Naive thymus-derived CD4-positive, alpha-beta T cell (primary cell): ENCODE measurements at regions of chr13 and their contacts with region 1.

Region 1: DNA sequence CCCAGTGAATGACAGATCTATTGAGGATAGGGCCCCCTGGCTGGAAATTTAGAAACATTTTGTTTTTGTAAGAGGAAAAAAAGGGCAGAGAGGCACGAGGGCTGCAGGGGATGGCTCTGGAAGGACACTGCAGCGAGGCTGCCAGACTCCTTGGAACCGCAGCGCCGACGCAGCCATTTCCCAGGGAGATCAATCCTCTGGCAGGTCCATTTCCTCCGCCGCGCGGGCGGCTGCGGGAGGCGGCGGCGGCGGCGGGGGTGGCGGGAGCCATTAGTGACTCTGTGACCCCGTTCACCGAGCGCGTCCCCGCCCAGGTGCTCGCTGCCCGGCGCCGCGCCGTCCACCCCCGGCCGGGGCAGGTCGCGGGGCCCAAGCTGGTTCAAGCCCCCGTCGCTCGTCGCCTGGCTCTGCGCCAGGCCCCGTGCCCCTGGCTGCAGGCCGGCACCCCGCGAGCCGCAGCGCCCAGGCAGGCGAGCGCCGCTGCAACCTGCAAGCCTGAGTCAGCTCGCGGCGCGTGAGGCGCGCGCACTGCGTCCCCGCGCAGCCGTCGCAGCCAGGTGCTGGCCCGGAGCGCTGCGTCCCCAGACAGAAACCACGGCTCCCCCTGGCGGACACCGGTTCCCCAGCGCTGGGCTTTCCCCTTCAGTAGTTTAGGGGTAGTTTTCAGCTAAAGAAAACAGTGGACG is 192.6 kb downstream of the KATNAL1 start:
- DNase-seq: peak; percentile 81 to 94 (median 91)
- ATAC-seq: peak; percentile 95
- H3K4me3 ChIP-seq: peak overlapping the region; percentile 48
- H3K4me3 Mint-ChIP-seq: peak overlapping the region; percentile 74 to 89 (median 84)
- H3K27ac ChIP-seq: peak overlapping the region; percentile 39
- H3K27ac Mint-ChIP-seq: peak overlapping the region in 8 of 9 donors; percentile 43 to 90 (median 80)
- H3K4me1 ChIP-seq: peaks cover 10 to 17% of the 10 kb centered on the region in 2 donors
- H3K4me1 Mint-ChIP-seq: peaks cover 17 to 41% (median 34%) of the 10 kb centered on the region in 7 donors
- H3K27me3 ChIP-seq: no peaks in the 10 kb centered on the region
- H3K27me3 Mint-ChIP-seq: peaks cover 0 to 11% (median 0%) of the 10 kb centered on the region in 5 donors

Region 2: GRCh38 chr13:29508130-29508875 is 606.4 kb before region 1 on chr13:
- CTCF ChIA-PET with region 1: interaction called, 41 read pairs
- POLR2A ChIA-PET with region 1: no interaction called
- intact Hi-C with region 1: loop called (anchors 1 kb)
- DNase-seq: peak; percentile 32 to 74 (median 61)
- ATAC-seq: peak; percentile 76
- H3K4me3 ChIP-seq: no peak overlapping the region
- H3K4me3 Mint-ChIP-seq: no peak overlapping the region
- H3K27ac ChIP-seq: no peak overlapping the region
- H3K27ac Mint-ChIP-seq: peak overlapping the region in 1 of 9 donors; percentile 21
- H3K4me1 ChIP-seq: no peaks in the 10 kb centered on the region
- H3K4me1 Mint-ChIP-seq: peaks cover 0 to 2% (median under 1%) of the 10 kb centered on the region in 7 donors
- H3K27me3 ChIP-seq: no peaks in the 10 kb centered on the region
- H3K27me3 Mint-ChIP-seq: peaks cover 3 to 6% (median 5%) of the 10 kb centered on the region in 5 donors

Region 3: GRCh38 chr13:29583073-29583785 is 531.5 kb before region 1 on chr13:
- CTCF ChIA-PET with region 1: no interaction called
- POLR2A ChIA-PET with region 1: no interaction called
- intact Hi-C with region 1: no loop called
- DNase-seq: no peak
- ATAC-seq: no peak
- H3K4me3 ChIP-seq: no peak overlapping the region
- H3K4me3 Mint-ChIP-seq: peak overlapping the region in 1 of 10 donors; percentile 9
- H3K27ac ChIP-seq: no peak overlapping the region
- H3K27ac Mint-ChIP-seq: peak overlapping the region in 2 of 9 donors; percentile 22 to 34
- H3K4me1 ChIP-seq: no peaks in the 10 kb centered on the region
- H3K4me1 Mint-ChIP-seq: peaks cover 16 to 77% (median 56%) of the 10 kb centered on the region in 7 donors
- H3K27me3 ChIP-seq: no peaks in the 10 kb centered on the region
- H3K27me3 Mint-ChIP-seq: no peaks in the 10 kb centered on the region

Region 4: GRCh38 chr13:29707876-29708543 is 406.7 kb before region 1 on chr13:
- CTCF ChIA-PET with region 1: no interaction called
- POLR2A ChIA-PET with region 1: no interaction called
- intact Hi-C with region 1: loop called in 1 of 2 experiments (anchors 5 kb)
- DNase-seq: peak in 7 of 9 donors; percentile 8 to 49 (median 31)
- ATAC-seq: peak; percentile 61
- H3K4me3 ChIP-seq: no peak overlapping the region
- H3K4me3 Mint-ChIP-seq: no peak overlapping the region
- H3K27ac ChIP-seq: no peak overlapping the region
- H3K27ac Mint-ChIP-seq: no peak overlapping the region
- H3K4me1 ChIP-seq: no peaks in the 10 kb centered on the region
- H3K4me1 Mint-ChIP-seq: peaks cover 0 to 3% (median 0%) of the 10 kb centered on the region in 7 donors
- H3K27me3 ChIP-seq: no peaks in the 10 kb centered on the region
- H3K27me3 Mint-ChIP-seq: peaks cover 10 to 26% (median 12%) of the 10 kb centered on the region in 5 donors

Region 5: DNA sequence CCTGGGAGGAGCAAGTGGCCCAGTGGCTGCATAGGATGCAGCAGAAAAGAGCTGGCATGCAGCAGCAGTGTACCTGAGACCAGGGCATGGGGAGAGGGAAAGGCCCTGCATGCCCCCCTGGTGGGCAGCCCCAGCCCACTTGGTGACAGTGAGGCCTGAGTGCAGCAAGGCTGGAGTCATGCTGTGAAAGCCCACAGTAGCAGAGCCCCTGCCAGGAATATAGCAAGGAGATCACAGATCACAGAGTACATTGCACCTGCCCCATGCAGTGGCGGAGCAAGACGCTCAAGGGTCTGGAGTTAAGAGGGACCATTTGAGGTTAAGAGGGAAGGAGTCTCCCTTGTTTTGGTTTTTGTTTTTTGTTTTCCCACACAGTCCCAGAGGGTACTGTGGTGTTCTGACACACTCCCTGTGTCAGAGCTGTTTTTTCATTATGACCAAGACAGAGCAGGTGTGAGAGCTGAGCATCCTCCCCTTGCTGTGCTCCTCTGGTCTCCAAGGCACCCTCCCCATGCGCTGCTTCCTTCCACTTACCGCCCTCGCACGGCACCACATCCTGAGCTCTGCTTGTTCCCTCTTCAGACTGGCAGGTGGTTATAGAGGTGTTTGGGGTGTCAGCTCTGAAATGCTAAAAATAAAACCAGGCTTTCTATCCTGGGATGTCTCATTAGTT is 179.3 kb before region 1 on chr13:
- CTCF ChIA-PET with region 1: interaction called, 100 read pairs
- POLR2A ChIA-PET with region 1: interaction called, 44 read pairs
- intact Hi-C with region 1: loop called (anchors 1 kb)
- DNase-seq: peak; percentile 38 to 84 (median 77)
- ATAC-seq: peak; percentile 93
- H3K4me3 ChIP-seq: peak overlapping the region; percentile 61
- H3K4me3 Mint-ChIP-seq: peak overlapping the region; percentile 67 to 95 (median 91)
- H3K27ac ChIP-seq: peak overlapping the region; percentile 71
- H3K27ac Mint-ChIP-seq: peak overlapping the region; percentile 81 to 96 (median 93)
- H3K4me1 ChIP-seq: peaks cover 38 to 43% of the 10 kb centered on the region in 2 donors
- H3K4me1 Mint-ChIP-seq: peaks cover 32 to 53% (median 51%) of the 10 kb centered on the region in 7 donors
- H3K27me3 ChIP-seq: no peaks in the 10 kb centered on the region
- H3K27me3 Mint-ChIP-seq: no peaks in the 10 kb centered on the region

Region 6: DNA sequence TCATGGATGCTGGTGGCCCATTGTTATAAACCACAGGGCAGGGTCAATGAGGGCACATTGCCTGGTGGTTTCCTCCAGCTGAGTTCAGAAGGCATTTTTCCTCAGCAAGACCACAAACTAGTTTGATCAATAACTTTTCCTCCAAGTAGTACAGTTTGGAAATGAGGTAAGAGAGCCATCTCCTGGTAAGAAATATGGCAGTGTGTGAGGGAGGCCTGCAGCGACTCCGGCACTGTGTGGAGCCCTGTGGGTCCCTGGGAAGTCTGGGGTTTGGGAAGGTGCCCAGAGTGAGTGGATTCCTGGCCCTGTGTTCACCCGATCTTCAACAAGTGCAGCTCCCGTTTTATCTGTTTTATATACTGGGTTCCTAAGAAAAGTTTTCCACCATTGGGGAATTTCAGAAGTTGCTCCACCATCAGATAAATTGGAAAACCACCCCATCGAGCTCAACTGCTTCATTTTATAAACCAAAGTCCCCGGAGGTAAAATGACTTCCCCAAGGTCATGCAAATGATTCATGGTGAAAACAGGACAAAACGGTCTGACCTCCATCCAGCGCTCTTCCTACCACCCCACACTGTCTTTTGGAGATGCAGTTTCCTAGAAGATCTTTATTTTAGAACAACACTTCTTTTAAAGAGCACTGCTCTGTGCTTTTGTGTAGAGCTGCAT is 44.2 kb after region 1 on chr13:
- CTCF ChIA-PET with region 1: interaction called, 15 read pairs
- POLR2A ChIA-PET with region 1: no interaction called
- intact Hi-C with region 1: loop called in 1 of 2 experiments (anchors 1 kb)
- DNase-seq: peak in 4 of 9 donors; percentile 30 to 48 (median 42)
- ATAC-seq: peak; percentile 67
- H3K4me3 ChIP-seq: no peak overlapping the region
- H3K4me3 Mint-ChIP-seq: peak overlapping the region in 2 of 10 donors; percentile 23 to 35
- H3K27ac ChIP-seq: no peak overlapping the region
- H3K27ac Mint-ChIP-seq: peak overlapping the region in 6 of 9 donors; percentile 21 to 59 (median 42)
- H3K4me1 ChIP-seq: peaks cover 5 to 35% of the 10 kb centered on the region in 2 donors
- H3K4me1 Mint-ChIP-seq: peaks cover 21 to 44% (median 33%) of the 10 kb centered on the region in 7 donors
- H3K27me3 ChIP-seq: no peaks in the 10 kb centered on the region
- H3K27me3 Mint-ChIP-seq: no peaks in the 10 kb centered on the region

Region 7: DNA sequence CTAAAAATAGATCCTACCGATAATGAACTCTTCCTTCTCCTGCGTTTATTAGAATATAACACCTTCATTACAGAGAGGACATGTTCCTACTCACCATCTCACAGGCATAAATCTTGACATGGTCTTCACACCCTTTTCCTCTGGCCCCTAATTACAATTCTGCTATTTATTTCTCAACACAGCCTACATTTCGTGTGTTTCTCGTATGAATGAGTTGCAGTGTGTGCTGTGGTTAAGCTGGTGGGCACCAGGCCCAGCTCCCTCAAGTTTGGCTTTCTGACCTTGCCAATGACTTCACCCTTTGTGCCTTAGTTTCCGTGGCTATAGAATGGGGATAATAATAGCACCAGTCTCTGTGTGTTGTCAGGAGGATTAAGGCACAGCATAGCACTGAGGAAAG is 204.9 kb after region 1 on chr13:
- CTCF ChIA-PET with region 1: no interaction called
- POLR2A ChIA-PET with region 1: no interaction called
- intact Hi-C with region 1: no loop called
- DNase-seq: no peak
- ATAC-seq: no peak
- H3K4me3 ChIP-seq: no peak overlapping the region
- H3K4me3 Mint-ChIP-seq: no peak overlapping the region
- H3K27ac ChIP-seq: no peak overlapping the region
- H3K27ac Mint-ChIP-seq: peak overlapping the region in 1 of 9 donors; percentile 39
- H3K4me1 ChIP-seq: no peaks in the 10 kb centered on the region
- H3K4me1 Mint-ChIP-seq: peaks cover 5 to 13% (median 9%) of the 10 kb centered on the region in 7 donors
- H3K27me3 ChIP-seq: no peaks in the 10 kb centered on the region
- H3K27me3 Mint-ChIP-seq: no peaks in the 10 kb centered on the region

Region 8: GRCh38 chr13:30802953-30803478 is 688.3 kb after region 1 on chr13:
- CTCF ChIA-PET with region 1: no interaction called
- POLR2A ChIA-PET with region 1: no interaction called
- intact Hi-C with region 1: loop called in 1 of 2 experiments (anchors 5 kb)
- DNase-seq: peak; percentile 54 to 83 (median 70)
- ATAC-seq: peak; percentile 97
- H3K4me3 ChIP-seq: peak overlapping the region; percentile 27
- H3K4me3 Mint-ChIP-seq: peak overlapping the region; percentile 17 to 75 (median 51)
- H3K27ac ChIP-seq: no peak overlapping the region
- H3K27ac Mint-ChIP-seq: peak overlapping the region in 1 of 9 donors; percentile 12
- H3K4me1 ChIP-seq: peaks cover 3 to 7% of the 10 kb centered on the region in 2 donors
- H3K4me1 Mint-ChIP-seq: peaks cover 5 to 19% (median 10%) of the 10 kb centered on the region in 7 donors
- H3K27me3 ChIP-seq: no peaks in the 10 kb centered on the region
- H3K27me3 Mint-ChIP-seq: peaks cover 0 to 5% (median 0%) of the 10 kb centered on the region in 5 donors